Spleen (tissue), 13 donors: ENCODE measurements at regions of chr3 and their contacts with region 1.

Region 1: GRCh38 chr3:43621656-43622432 is at the start of gene ANO10:
- DNase-seq: peak; percentile 99
- H3K4me3 ChIP-seq: peak within 1 kb of the TSS; percentile 58 to 88 (median 72)
- H3K27ac ChIP-seq: peak within 1 kb of the TSS; percentile 28 to 90 (median 83)
- H3K4me1 ChIP-seq: peaks cover 9 to 36% (median 21%) of the 10 kb centered on the region in 6 donors
- H3K27me3 ChIP-seq: no peaks in the 10 kb centered on the region
- CTCF ChIP-seq: peak in 2 of 11 experiments; percentile 20 to 36
- POLR2A ChIP-seq: no peak
- total RNA-seq, gene ANO10: 12.5 to 21.7 (median 18.8) TPM

Region 2: GRCh38 chr3:43690400-43691119 is 68.7 kb after region 1 on chr3 and contains the start of gene ABHD5:
- intact Hi-C with region 1: loop called (anchors 5 kb)
- DNase-seq: peak; percentile 99
- H3K4me3 ChIP-seq: peak within 1 kb of the TSS; percentile 62 to 92 (median 72)
- H3K27ac ChIP-seq: peak within 1 kb of the TSS; percentile 61 to 99 (median 96)
- H3K4me1 ChIP-seq: peaks cover 8 to 52% (median 24%) of the 10 kb centered on the region in 6 donors
- H3K27me3 ChIP-seq: no peaks in the 10 kb centered on the region
- CTCF ChIP-seq: peak in 9 of 11 experiments; percentile 24 to 63 (median 43)
- POLR2A ChIP-seq: peak; percentile 99 to 100 (median 99)
- total RNA-seq, gene ABHD5: 14.4 to 44.8 (median 26.2) TPM

Region 3: DNA sequence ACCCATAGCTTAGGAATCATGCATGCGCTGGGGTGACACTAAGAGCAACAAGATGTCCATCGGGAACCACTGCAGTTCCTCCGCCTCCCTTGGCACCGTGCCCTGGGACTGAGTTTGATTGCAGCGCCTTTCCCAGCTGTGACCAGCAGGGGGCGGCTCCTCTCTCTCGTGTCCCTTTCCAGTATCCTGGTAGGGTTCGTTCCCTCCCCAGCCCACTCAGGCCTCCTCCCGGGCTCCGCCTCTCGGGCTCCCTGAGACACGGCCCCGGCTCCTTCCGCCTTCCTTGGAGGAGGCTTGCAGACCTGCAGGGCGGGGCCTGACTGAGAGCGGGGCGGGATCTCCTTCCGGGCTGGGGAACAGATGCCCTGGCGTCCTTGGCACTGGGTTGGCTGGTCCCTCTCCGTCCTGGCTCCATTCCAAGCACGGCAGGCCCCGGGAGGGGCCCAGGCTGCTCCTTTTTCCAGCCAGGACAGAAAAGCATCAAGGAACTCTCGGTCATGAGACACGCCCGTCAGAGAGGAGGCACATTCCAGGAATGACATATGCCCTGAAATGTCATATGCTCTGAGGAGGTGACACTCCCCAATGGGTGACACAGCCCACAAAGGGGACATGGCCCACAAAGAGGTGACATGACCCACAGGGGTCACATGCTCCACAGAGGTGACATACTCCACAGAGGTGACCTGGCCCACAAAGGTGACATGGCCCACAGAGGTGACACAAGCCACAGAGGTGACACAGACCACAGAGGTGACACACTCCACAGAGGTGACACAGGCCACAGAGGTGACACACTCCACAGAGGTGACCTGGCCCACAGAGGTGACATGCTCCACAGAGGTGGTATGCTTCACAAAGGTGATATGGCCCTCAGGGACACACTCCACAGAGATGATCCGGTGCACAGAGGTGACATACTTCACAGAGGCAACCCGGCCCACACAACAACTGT is 147.9 kb after region 1 on chr3:
- intact Hi-C with region 1: no loop called
- DNase-seq: peak; percentile 95
- H3K4me3 ChIP-seq: peak overlapping the region in 3 of 8 donors; percentile 0 to 49 (median 21)
- H3K27ac ChIP-seq: peak overlapping the region in 7 of 8 donors; percentile 63 to 82 (median 71)
- H3K4me1 ChIP-seq: peaks cover 13 to 49% (median 31%) of the 10 kb centered on the region in 6 donors
- H3K27me3 ChIP-seq: peaks cover 0 to 11% (median 0%) of the 10 kb centered on the region in 7 donors
- CTCF ChIP-seq: peak; percentile 67 to 96 (median 90)
- POLR2A ChIP-seq: no peak